PC-3 (cell line): ENCODE measurements at regions of chr16 and their contacts with region 1.

Region 1: DNA sequence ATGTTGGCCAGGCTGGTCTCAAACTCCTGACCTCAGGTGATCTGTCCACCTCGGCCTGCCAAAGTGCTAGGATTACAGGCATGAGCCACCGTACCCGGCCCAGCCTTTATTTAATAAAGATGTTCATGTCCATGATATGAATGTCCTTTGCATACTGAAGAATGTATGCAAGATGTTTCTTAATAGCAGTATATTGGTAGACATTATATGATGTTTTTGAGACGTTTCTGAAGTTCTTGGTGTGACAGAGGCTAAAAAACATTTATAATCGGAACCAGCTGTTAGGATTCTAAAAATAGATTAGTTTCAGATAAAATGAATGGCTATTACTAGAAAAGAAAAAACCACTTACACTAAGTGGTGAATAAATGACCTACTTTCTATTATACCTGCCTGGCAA is 11.8 kb downstream of the PDZD9 start:
- DNase-seq: no peak
- ATAC-seq: no peak
- H3K4me3 ChIP-seq: no peak overlapping the region
- H3K27ac ChIP-seq: peak overlapping the region; percentile 27
- H3K4me1 ChIP-seq: peaks cover 21% of the 10 kb centered on the region
- H3K27me3 ChIP-seq: no peaks in the 10 kb centered on the region
- CTCF ChIP-seq: no peak

Region 2: GRCh38 chr16:21971856-21972255 is 17.3 kb before region 1 on chr16:
- CTCF ChIA-PET with region 1: interaction called, 10 read pairs
- POLR2A ChIA-PET with region 1: no interaction called
- intact Hi-C with region 1: no loop called
- DNase-seq: no peak
- ATAC-seq: no peak
- H3K4me3 ChIP-seq: no peak overlapping the region
- H3K27ac ChIP-seq: no peak overlapping the region
- H3K4me1 ChIP-seq: peaks cover 4% of the 10 kb centered on the region; the same call in 1 of the 2 replicates
- H3K27me3 ChIP-seq: no peaks in the 10 kb centered on the region
- CTCF ChIP-seq: no peak

Region 3: DNA sequence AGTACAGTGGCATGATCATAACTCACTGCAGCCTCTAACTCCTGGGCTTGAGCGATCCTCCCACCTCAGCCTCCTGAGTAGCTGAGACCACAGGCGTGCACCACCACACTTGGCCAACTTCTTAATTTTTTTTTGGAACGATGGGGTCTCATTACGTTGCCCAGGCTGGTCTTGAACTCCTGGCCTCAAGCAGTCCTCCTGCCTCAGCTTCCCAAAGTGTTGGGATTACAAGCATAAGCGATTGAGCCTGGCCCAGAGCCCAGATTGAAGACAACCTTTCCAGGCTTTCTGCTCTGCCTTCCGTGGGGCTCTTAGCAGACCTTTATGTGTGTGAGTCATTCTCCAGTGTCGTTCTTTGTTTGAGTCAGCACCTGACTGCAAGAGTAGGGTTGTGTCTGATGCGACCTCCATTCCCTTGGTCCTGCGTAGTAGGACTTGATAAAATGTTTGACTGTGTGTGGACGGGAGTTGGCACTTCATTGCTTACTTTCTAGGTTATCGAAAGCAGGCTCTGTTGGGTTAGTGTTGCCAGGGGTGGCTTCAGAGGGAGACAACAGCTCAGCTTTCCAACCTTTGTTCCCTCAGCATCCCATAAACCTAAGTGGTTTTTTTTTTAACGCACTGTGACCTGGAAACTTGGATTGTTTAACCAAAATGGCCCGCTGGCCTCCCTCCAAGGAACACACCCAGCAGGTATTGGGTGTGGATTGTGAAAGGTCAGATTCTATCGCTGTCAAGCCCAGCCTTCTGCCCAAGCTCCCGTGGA is 243.3 kb after region 1 on chr16:
- CTCF ChIA-PET with region 1: no interaction called
- POLR2A ChIA-PET with region 1: no interaction called
- intact Hi-C with region 1: no loop called
- DNase-seq: peak; percentile 89
- ATAC-seq: peak; percentile 98
- H3K4me3 ChIP-seq: peak overlapping the region; percentile 52; the same call in 1 of the 2 replicates
- H3K27ac ChIP-seq: peak overlapping the region; percentile 99
- H3K4me1 ChIP-seq: peaks cover 12% of the 10 kb centered on the region
- H3K27me3 ChIP-seq: no peaks in the 10 kb centered on the region
- CTCF ChIP-seq: no peak